Lower leg skin (tissue), 4 donors: ENCODE measurements at regions of chr1 and their contacts with region 1.

Region 1: DNA sequence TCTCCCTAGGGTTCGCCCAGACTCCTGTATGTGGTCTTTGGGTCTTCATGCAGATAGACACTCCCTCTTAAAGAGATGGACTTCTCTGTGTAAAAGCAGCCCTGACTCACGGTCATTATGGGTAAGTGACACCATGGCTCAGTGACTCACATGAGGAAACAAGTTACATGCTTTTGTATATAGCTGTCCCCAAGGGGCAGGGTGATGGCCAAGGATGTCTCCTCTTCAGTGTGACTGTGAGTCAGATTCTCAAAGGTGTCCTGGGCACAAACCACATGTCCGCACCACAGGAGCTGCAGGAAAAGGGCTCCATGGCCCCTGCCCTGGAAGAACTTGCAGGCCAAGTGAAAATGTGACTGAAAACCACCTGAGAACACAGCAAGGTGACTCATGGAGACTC is 380.4 kb downstream of the NPHP4 start:
- DNase-seq: peak; percentile 53 to 84
- H3K4me3 ChIP-seq: no peak overlapping the region
- CTCF ChIP-seq: no peak
- POLR2A ChIP-seq: no peak

Region 2: DNA sequence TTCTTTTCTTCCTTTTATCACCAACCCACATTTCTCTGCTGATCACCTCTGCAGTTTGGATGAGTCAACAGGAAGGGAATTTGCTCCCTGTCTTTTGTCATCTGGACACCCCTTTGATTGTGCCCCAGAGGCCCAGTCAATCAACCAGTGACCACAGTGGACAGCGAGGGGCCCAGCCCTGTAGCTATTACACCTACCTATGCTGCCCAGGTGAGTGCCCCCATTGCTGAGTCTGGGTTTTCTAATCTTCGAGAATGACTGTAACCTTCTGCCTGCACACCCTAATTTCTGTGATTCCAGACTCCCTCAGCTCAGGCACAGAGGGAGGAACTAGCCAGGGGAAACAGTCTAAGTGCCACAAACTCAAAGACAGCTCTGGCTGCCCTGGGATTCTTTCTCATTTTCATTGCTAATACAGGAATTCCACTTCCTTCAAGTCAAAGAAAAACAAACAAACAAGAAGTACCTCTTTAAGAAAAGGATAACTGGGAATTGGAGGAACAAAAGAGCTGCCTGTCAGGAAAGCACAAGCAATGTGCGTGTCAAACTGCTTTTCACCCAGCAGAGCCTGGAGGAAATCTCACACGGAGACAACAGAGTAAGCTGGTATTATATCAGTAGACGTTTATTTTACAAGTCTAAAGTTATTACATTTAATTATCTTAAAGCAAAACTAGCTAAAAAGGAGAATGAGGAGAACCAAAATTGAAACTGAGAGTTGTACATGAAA is 646.3 kb before region 1 on chr1:
- intact Hi-C with region 1: loop called (anchors 5 kb)
- DNase-seq: peak in 1 of 2 donors; percentile 14
- H3K4me3 ChIP-seq: no peak overlapping the region
- CTCF ChIP-seq: no peak
- POLR2A ChIP-seq: no peak